ENCODE measurements at regions of chr11 and their contacts with region 1.

Region 1: DNA sequence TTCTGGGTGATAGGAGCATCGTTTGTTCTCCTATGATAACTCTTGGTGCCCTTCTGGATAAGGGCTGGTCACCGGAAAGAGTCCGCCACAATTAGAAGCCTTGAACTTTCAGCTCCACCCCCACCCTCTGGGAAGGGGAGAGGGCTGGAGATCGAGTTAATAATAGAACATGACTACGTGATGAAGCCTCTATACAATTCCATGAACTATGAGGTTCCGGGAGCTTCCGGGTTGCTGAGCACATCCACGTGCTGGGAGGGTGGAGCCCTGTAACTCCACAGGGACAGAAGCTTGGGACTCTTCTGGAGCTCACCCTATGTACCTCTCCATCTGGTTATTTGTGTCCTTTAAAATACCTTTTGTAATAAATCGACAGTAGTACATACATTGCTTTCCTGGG is 40.3 kb downstream of the ARHGAP42 start:
- DNase-seq: no peak
- H3K4me3 ChIP-seq: no peak overlapping the region
- H3K27ac ChIP-seq: no peak overlapping the region
- H3K4me1 ChIP-seq: no peaks in the 10 kb centered on the region
- H3K27me3 ChIP-seq: no peaks in the 10 kb centered on the region
- CTCF ChIP-seq: no peak

Region 2: GRCh38 chr11:100473390-100473740 is 254.0 kb before region 1 on chr11:
- CTCF ChIA-PET with region 1: no interaction called
- POLR2A ChIA-PET with region 1: no interaction called
- intact Hi-C with region 1: no loop called
- DNase-seq: no peak
- H3K4me3 ChIP-seq: no peak overlapping the region
- H3K27ac ChIP-seq: no peak overlapping the region
- H3K4me1 ChIP-seq: no peaks in the 10 kb centered on the region
- H3K27me3 ChIP-seq: 0 out of 2 replicates have a peak, but pooled peaks cover 2% of the 10 kb centered on the region
- CTCF ChIP-seq: no peak

Region 3: DNA sequence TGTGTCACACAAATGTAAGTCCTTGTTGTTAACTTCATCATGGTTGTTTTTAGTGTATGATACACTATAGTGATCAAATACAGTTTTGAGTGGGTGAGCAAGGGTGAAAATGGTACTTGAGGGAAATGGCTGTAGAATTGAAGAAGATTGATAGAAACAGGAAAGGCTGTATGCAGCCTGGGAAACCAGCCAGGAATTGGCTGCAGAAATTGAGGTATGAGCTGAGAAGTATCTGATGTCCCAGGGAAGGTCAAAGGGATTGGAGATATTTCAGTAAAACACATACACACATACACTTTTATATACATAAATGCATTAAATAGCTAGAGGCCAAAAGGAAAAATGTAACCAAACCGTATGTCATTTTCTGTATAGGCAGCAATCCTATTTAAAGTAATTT is 1369.8 kb after region 1 on chr11:
- CTCF ChIA-PET with region 1: no interaction called
- POLR2A ChIA-PET with region 1: interaction called, 21 read pairs
- intact Hi-C with region 1: no loop called
- DNase-seq: no peak
- H3K4me3 ChIP-seq: no peak overlapping the region
- H3K27ac ChIP-seq: no peak overlapping the region
- H3K4me1 ChIP-seq: no peaks in the 10 kb centered on the region
- H3K27me3 ChIP-seq: no peaks in the 10 kb centered on the region
- CTCF ChIP-seq: no peak

Measured in PC-9 (cell line).